Brain microvascular endothelial cell (primary cell): ENCODE measurements at regions of chr12 and their contacts with region 1.

Region 1: DNA sequence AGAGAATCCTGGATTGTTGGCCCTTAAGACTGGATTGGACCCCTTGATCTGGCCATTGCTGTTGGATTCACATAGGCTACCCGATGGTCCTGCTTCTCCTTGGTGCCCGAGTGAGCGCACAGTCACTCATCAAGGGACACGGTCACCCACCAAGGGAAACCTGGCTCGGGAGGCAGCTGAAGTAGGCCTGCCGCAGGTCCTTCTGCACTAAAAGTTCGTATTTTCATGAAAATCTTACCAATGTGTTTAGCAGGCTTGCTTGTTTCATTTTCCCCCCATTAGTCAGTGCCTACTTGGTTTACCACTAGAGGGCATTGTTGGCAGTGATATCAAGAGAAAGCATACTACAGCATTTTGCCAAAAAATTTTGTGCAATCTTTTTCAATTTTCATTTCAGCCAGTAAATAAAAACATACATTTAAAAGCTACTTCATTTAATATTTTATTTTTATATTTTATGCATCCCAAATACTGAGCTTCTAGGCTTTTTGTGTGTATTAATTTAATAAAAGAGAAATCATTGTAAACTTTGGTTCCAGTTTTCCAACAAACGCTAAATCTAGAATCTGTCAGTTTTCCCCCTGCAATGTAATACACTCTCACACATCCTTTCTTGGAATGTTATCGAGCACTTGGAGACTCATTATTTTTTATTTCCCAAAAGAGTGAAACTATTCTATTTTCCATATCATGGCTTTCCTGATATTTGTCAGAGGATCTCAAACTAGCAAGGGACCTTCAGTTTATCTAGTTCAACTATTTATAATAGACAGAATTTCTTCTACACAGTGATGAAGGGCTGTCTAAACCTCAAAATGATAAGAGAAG is 116.7 kb downstream of the LMNTD1 start:
- DNase-seq: peak; percentile 58
- H3K4me3 ChIP-seq: peak overlapping the region; percentile 15
- H3K27ac ChIP-seq: no peak overlapping the region
- H3K27me3 ChIP-seq: no peaks in the 10 kb centered on the region
- CTCF ChIP-seq: peak; percentile 78

Region 2: DNA sequence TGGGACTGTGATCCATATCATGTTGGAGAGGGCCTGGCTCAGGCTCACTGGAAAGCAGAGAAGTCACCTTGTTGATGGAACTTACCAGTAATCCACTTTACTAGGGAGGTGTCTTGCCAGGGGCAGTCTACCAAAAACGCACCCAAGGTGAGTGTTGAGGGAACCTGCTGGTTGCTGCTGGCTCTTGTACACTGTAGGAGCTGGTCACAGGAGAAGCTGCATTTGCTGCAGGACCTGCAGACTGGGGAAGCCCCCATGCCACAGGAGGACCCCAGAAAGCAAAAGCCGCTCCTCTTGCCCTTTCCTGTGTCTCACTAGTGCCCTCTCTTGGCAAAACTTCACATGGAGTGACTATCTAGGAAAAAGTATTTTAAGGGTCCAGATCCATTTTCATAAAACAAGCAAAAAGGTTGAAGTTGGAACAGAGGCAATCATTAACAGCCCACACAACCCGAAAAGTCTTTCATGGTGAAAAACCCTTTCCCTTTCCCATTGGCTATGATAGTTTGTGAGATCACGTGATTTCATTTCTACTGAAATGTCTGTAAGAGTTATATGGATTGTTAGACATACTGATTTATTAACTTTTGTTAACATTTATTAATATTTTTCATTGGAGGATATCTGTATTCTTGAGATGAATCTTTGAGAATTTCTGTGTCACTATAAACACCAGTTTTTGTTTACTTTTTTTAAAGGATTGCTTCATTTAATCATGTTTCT is 581.2 kb after region 1 on chr12:
- in situ Hi-C with region 1: loop called (anchors 25 kb)
- DNase-seq: no peak
- H3K4me3 ChIP-seq: no peak overlapping the region
- H3K27ac ChIP-seq: no peak overlapping the region
- H3K27me3 ChIP-seq: no peaks in the 10 kb centered on the region
- CTCF ChIP-seq: peak; percentile 77